Psoas muscle (tissue), 8 donors: ENCODE measurements at regions of chr11 and their contacts with region 1.

Region 1: GRCh38 chr11:18495271-18495670 is 31.5 kb downstream of the TSG101 start:
- DNase-seq: no peak
- ATAC-seq: no peak
- H3K4me3 ChIP-seq: no peak overlapping the region
- H3K27ac ChIP-seq: no peak overlapping the region
- H3K4me1 ChIP-seq: peaks cover 13% of the 10 kb centered on the region
- H3K27me3 ChIP-seq: no peaks in the 10 kb centered on the region
- CTCF ChIP-seq: no peak

Region 2: GRCh38 chr11:18408558-18409242 is 86.6 kb before region 1 on chr11:
- intact Hi-C with region 1: loop called in 1 of 2 experiments (anchors 5 kb)
- DNase-seq: no peak
- ATAC-seq: peak; percentile 14 to 41 (median 21)
- H3K4me3 ChIP-seq: no peak overlapping the region
- H3K27ac ChIP-seq: no peak overlapping the region
- H3K4me1 ChIP-seq: no peaks in the 10 kb centered on the region
- H3K27me3 ChIP-seq: no peaks in the 10 kb centered on the region
- CTCF ChIP-seq: no peak